Lower lobe of right lung (tissue), 2 donors: ENCODE measurements at regions of chr13 and their contacts with region 1.

Region 1: GRCh38 chr13:75870397-75870903 is 234.3 kb downstream of the LMO7 start:
- DNase-seq: no peak
- ATAC-seq: peak; percentile 47 to 58
- H3K4me3 ChIP-seq: peak overlapping the region; percentile 51
- H3K27ac ChIP-seq: no peak overlapping the region
- H3K4me1 ChIP-seq: peaks cover 6% of the 10 kb centered on the region
- H3K27me3 ChIP-seq: no peaks in the 10 kb centered on the region
- CTCF ChIP-seq: peak; percentile 75

Region 2: DNA sequence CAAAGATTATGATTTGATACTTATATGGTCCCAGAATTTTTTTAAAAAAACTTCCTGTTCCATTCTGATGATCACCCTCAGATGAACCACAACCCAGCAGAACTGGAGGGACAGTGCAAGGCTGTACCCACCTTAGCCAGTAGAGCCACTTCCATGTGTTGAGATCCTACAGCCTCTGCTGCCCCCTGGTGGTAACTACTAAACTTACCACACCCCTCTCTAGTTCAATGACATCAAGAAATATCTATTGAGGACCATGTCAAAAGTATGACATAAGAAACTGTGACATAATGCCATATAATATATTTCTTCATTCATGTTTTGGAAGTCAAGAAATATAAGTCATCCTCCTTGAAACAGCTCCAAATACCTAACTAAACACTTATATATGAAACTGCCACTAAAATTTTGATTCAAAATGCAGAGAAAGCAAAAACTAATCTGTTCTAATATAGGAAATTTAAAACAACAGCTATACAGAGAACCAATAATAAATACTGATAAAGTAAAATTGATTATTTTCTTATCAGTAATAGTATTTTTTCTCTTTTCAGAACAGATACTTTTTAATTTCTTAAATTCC is 603.2 kb after region 1 on chr13:
- intact Hi-C with region 1: loop called (anchors 5 kb)
- DNase-seq: peak; percentile 48
- ATAC-seq: peak; percentile 95 to 96
- H3K4me3 ChIP-seq: no peak overlapping the region
- H3K27ac ChIP-seq: no peak overlapping the region
- H3K4me1 ChIP-seq: no peaks in the 10 kb centered on the region
- H3K27me3 ChIP-seq: no peaks in the 10 kb centered on the region
- CTCF ChIP-seq: peak; percentile 88